Activated naive CD8-positive, alpha-beta T cell treated with anti-CD3 and anti-CD28 coated beads, Interleukin-2, amount 10 ng/mL, durations not matched to agents 7 days and 5 days (primary cell): ENCODE measurements at regions of chr2 and their contacts with region 1.

Region 1: GRCh38 chr2:61538200-61538919 is at the start of gene XPO1:
- DNase-seq: peak; percentile 96
- ATAC-seq: peak; percentile 83
- H3K4me3 Mint-ChIP-seq: peak within 1 kb of the TSS; percentile 100
- H3K27ac Mint-ChIP-seq: peak within 1 kb of the TSS; percentile 100
- H3K4me1 Mint-ChIP-seq: peaks cover 23% of the 10 kb centered on the region
- H3K27me3 Mint-ChIP-seq: peaks cover 2% of the 10 kb centered on the region
- total RNA-seq, gene XPO1: 197 to 208 TPM

Region 2: DNA sequence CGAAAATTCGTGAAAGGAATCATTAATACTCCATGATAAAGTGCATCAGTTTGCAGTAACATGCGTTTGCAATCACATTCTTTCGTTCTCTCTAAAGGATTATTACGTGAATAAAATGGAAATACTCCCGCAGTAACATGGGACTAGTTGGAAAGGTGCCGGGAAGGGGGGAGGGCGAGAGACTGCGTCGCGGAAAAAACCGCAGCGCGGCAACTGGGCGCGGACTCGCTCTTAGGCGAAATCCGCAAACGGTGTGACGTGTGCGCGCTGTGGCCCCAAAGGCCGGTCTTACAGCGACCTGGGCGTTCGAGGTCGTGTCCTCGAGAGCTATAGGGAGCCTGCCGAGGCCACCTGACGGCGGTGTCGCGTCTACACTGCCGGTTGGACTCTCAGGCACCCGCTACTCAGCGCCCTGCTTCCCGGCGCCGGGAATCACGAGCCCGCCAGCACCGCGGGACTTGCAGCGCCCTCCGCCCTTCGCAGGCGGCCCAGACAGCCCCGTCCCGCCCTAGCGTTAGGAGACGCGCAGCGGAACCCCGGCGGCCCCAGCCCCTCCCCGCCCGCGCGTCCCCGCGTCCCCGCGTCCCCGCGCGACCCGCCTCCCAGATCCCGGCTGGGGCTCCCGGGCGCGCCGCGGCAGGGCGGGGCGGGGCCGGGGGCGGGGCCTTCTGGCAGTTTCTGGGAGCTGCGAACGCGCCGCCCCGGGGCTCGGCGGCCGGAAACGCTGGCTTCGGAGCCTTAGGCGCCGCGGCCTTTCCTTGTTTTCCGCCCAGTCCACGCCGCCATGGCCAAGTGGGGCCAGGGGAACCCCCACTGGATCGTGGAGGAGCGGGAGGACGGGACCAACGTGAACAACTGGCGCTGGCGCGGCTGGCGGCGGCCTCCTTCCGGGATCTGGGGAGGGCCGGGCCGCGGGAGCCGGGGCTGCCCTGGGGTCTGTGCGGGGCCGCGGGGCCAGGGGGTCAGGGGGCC is 361.3 kb before region 1 on chr2:
- POLR2A ChIA-PET with region 1: interaction called, 23 read pairs
- DNase-seq: peak; percentile 99
- ATAC-seq: peak; percentile 89
- H3K4me3 Mint-ChIP-seq: peak overlapping the region; percentile 94
- H3K27ac Mint-ChIP-seq: peak overlapping the region; percentile 78
- H3K4me1 Mint-ChIP-seq: peaks cover 39% of the 10 kb centered on the region
- H3K27me3 Mint-ChIP-seq: peaks cover 8% of the 10 kb centered on the region

Region 3: DNA sequence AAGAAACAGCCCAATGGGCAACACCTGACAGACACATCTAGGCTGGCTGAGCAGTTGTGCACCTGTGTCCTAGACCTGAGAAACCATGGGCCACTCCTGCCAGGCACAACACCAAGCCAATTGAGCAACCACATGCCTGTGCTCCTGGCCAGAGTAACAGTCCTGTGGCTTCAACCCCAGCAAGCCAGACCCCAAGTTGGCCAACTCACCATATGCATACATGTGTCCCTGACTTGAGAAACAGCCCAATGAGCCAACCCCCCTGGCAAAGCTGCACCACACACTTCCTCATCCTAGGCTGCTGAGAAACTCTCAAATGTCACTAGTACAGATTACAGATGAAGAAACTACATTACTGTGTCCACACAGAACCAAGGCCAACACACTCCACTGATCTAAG is 104.0 kb before region 1 on chr2:
- POLR2A ChIA-PET with region 1: no interaction called
- DNase-seq: no peak
- ATAC-seq: no peak
- H3K4me3 Mint-ChIP-seq: no peak overlapping the region
- H3K27ac Mint-ChIP-seq: no peak overlapping the region
- H3K4me1 Mint-ChIP-seq: peaks cover 24% of the 10 kb centered on the region
- H3K27me3 Mint-ChIP-seq: no peaks in the 10 kb centered on the region

Region 4: DNA sequence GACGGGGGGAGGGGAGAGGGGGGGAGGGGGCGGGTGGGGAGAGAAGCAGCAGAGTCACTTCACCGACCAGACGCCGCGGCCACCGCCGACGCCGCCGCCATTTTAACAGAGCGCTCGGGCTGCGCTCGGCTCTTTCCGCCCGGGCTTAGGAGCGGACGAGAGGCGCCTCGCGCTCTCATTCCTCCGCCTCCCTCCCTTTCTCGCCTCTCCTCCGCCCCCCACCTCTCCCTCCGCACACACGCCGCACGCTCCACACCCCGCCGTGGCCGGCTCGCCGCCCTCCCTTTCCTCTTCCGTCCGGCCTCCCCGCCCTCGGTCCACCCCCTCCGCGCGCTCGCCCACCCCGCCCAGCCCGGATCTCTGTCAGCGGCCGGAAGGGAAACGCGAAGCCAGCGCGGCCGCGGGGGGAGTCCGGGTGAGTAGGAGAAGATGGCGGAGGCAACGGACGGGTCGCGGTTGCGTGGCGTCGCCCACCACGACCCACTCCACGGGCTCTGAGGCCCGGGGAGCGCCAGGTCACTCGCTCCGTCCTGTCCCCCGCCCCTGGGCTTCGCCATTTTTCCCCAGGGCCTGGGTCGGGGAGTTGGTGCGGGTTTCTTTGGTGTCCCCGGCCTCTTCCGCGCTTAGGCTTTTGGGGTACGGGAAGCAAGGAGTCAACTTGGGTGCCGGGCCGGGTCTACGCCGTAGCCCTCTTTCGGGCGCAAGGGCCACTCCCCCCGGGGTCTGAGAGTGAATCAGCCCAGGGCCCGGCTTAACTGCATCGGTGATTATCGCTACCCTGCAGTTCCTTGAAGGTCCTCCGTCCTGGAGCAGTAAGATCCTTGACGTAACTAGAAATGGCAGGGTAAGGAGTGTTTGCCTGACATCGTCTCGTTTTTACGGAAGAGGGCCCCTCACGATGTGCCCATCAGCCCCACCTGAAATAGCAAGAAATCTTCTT is 67.1 kb before region 1 on chr2 and contains the start of gene USP34:
- POLR2A ChIA-PET with region 1: interaction called, 13 read pairs
- DNase-seq: peak; percentile 90
- ATAC-seq: peak; percentile 93
- H3K4me3 Mint-ChIP-seq: peak within 1 kb of the TSS; percentile 98
- H3K27ac Mint-ChIP-seq: peak within 1 kb of the TSS; percentile 96
- H3K4me1 Mint-ChIP-seq: peaks cover 22% of the 10 kb centered on the region
- H3K27me3 Mint-ChIP-seq: no peaks in the 10 kb centered on the region
- total RNA-seq, gene USP34: 109 to 111 TPM

Region 5: GRCh38 chr2:61670591-61671501 is 132.5 kb after region 1 on chr2:
- POLR2A ChIA-PET with region 1: interaction called, 15 read pairs
- DNase-seq: no peak
- ATAC-seq: peak; percentile 77
- H3K4me3 Mint-ChIP-seq: peak overlapping the region; percentile 83
- H3K27ac Mint-ChIP-seq: peak overlapping the region; percentile 91
- H3K4me1 Mint-ChIP-seq: peaks cover 17% of the 10 kb centered on the region
- H3K27me3 Mint-ChIP-seq: no peaks in the 10 kb centered on the region

Region 6: DNA sequence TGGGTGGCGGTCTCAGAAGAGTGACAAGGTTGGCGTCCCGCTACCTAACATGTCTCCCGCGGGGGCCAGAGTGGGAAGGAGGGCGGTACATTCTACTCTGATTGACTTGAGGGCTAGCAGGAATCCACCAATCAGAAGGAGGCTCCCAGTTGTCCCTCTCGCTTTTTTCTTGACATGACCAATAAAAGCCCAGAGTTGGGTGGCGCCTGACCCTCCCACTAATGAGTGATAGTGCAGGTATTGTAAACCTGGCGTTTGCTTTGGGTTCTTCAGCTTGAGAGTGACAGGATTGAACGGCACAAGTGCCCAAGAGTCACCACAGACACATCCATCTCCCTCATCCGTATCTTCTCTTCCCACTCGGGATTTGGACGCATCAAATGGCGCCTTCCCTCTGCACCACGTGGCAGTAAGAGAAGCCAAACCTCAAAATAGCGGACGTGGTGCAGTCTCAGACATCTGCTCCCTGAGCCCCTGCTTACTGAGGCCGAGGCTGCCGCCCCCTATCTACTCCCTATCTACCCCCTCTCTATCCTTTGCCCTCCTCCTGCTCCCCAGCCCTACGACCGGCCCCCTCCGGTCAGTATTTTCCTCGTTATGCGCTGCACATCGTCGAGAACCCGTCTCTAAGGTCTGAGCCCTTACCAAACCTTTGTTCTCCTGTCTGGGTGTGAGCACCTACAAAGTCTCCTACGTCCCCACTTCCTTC is 316.3 kb after region 1 on chr2:
- POLR2A ChIA-PET with region 1: interaction called, 10 read pairs
- DNase-seq: peak; percentile 80
- ATAC-seq: peak; percentile 90
- H3K4me3 Mint-ChIP-seq: peak overlapping the region; percentile 86
- H3K27ac Mint-ChIP-seq: peak overlapping the region; percentile 97
- H3K4me1 Mint-ChIP-seq: peaks cover 18% of the 10 kb centered on the region
- H3K27me3 Mint-ChIP-seq: no peaks in the 10 kb centered on the region